Dorsolateral prefrontal cortex (tissue), 120 donors: ENCODE measurements at regions of chr4 and their contacts with region 1.

Region 1: DNA sequence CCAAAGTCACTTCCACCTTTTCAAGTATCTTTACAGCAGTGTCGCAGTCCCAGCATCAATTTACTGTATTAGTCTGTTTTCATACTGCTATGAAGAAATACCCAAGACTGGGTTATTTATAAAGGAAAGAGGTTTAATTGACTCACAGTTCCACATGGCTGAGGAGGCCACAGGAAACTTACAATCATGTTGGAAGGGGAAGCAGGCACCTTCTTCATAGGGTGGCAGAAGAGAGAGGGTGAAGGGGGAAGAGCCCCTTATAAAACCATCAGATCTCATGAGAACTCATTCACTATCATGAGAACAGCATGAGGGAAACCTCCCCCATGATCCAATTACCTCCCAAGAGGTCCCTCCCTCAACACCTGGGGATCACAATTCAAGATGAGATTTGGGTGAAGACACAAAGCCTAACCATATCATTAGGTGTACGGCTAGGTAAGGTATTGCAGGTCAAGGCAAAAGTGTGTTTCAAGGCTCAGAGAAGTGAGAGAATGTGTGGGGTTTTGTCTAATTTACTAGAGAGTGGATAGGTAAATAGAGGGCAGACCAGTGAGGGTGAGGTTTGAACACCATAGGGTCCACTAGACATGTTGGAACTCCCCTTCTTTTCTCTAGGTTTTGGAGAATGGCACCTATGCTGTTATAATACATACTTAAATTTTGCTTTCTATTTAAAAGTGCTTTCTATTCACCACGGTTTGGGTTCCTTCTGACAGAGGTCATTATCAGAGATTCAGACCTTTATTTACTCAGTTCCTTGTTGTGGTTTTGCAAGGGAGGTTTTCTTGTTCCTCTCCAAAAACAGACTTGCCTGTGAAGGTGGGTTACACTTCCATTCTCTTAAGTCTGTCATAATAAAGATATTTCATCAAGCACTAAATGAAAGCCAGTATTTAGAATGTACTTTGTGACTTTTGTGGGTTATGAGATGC is 186.6 kb downstream of the CPEB2 start:
- DNase-seq: no peak
- H3K4me3 ChIP-seq: no peak overlapping the region
- H3K27ac ChIP-seq: no peak overlapping the region
- H3K27me3 ChIP-seq: no peaks in the 10 kb centered on the region
- CTCF ChIP-seq: no peak

Region 2: DNA sequence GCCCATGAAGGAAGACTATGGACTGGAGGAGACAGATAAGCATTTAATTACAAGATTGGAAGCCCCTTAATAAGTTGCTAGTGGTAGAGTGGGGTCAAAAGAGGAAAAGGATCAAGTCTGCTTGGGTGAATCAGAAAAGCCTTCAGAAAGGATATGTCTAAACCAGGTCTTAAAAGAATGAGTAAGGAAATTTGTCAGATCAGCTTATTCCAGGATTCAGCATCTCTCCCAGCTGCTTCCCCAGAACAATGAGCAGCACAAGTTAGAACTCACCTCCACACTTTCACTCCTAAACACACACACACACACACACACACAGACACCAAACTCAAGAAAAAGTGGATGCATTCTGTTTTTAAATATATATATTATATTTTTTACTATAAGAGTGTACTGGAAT is 20.1 kb before region 1 on chr4:
- intact Hi-C with region 1: loop called in 1 of 2 experiments (anchors 2 kb)
- DNase-seq: no peak
- H3K4me3 ChIP-seq: no peak overlapping the region
- H3K27ac ChIP-seq: no peak overlapping the region
- H3K27me3 ChIP-seq: peaks cover 0 to 3% (median 0%) of the 10 kb centered on the region in 45 donors
- CTCF ChIP-seq: no peak

Region 3: DNA sequence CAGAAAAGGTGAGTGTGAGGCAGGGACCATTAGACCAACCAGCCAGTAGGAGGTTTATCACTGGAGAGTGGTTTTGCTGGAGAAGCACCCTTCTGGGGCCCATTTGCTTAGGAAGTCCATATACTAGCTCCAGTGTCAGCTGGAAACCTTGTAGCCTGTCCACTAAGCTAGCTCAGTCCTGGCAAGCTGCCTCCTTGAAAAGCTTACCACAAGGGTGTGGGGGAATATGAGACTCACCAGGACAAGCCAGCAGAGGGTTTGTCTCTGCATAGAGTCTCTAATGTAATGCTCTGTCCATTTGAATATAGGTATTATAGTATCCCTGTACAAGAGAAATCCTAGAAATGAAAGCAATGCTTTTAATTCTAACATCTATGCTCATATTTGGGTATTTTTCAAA is 379.9 kb after region 1 on chr4:
- intact Hi-C with region 1: no loop called
- DNase-seq: no peak
- H3K4me3 ChIP-seq: no peak overlapping the region
- H3K27ac ChIP-seq: no peak overlapping the region
- H3K27me3 ChIP-seq: no peaks in the 10 kb centered on the region
- CTCF ChIP-seq: no peak